ENCODE measurements at regions of chr12 and their contacts with region 1.

Region 1: DNA sequence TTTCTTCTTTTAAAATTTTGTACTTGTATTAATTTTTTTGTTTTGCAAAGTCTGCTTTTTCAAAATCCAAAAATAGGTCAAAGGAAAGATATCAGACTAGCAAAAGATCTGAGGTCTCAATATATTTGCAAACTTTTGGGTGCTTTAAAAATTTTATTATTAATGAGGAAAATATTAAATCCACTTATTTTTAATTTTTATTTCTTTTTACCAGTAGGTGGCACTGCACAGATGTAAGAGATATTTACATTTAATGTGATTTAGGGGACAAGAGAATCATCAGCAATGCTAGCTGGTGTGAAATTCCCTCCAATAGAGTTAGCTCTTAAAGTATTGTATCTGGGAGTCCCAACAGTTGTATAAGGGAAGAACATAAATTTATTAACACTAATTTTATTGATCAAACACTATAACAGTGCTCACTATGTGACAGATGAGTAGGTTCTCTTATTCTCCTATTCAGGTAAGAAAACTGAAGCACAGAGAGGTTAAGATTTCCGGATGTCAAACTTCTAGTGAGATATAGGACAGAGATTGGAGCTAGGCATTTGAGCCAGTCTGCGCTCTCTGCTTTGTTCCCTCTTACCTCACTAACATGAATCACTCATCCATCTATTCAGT is 30.5 kb downstream of the ALX1 start:
- DNase-seq: peak; percentile 11
- H3K4me3 Mint-ChIP-seq: no peak overlapping the region
- H3K27ac Mint-ChIP-seq: no peak overlapping the region
- H3K4me1 Mint-ChIP-seq: no peaks in the 10 kb centered on the region
- H3K27me3 Mint-ChIP-seq: no peaks in the 10 kb centered on the region
- CTCF ChIP-seq: peak; percentile 10

Region 2: GRCh38 chr12:85155787-85156186 is 154.8 kb before region 1 on chr12:
- CTCF ChIA-PET with region 1: interaction called, 3 read pairs
- POLR2A ChIA-PET with region 1: no interaction called
- intact Hi-C with region 1: loop called (anchors 2 kb)
- DNase-seq: peak; percentile 60
- H3K4me3 Mint-ChIP-seq: no peak overlapping the region
- H3K27ac Mint-ChIP-seq: no peak overlapping the region
- H3K4me1 Mint-ChIP-seq: no peaks in the 10 kb centered on the region
- H3K27me3 Mint-ChIP-seq: no peaks in the 10 kb centered on the region
- CTCF ChIP-seq: peak; percentile 37

Region 3: GRCh38 chr12:85244561-85244960 is 66.0 kb before region 1 on chr12:
- CTCF ChIA-PET with region 1: no interaction called
- POLR2A ChIA-PET with region 1: no interaction called
- intact Hi-C with region 1: no loop called
- DNase-seq: no peak
- H3K4me3 Mint-ChIP-seq: no peak overlapping the region
- H3K27ac Mint-ChIP-seq: no peak overlapping the region
- H3K4me1 Mint-ChIP-seq: no peaks in the 10 kb centered on the region
- H3K27me3 Mint-ChIP-seq: no peaks in the 10 kb centered on the region
- CTCF ChIP-seq: no peak

Region 4: DNA sequence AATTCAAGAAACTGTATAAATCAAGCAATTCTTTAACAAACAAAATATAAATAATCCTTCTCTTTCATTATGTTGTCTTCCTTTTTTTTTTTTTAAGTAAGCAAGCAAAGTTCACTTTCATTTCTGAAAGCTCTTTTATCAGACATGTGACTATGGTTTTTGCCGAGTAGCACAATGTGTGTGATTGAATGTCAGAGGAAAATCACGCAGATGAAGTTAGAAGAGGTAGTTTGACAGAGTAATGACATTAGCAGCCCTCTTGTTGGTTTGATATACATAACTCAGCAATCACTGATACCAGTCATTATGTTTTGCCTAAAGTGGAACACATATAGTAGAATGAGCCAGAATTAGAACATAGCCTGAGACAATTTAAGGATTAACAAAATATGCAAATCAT is 11.5 kb before region 1 on chr12:
- CTCF ChIA-PET with region 1: interaction called, 11 read pairs
- POLR2A ChIA-PET with region 1: no interaction called
- intact Hi-C with region 1: no loop called
- DNase-seq: no peak
- H3K4me3 Mint-ChIP-seq: no peak overlapping the region
- H3K27ac Mint-ChIP-seq: no peak overlapping the region
- H3K4me1 Mint-ChIP-seq: no peaks in the 10 kb centered on the region
- H3K27me3 Mint-ChIP-seq: no peaks in the 10 kb centered on the region
- CTCF ChIP-seq: no peak

Region 5: DNA sequence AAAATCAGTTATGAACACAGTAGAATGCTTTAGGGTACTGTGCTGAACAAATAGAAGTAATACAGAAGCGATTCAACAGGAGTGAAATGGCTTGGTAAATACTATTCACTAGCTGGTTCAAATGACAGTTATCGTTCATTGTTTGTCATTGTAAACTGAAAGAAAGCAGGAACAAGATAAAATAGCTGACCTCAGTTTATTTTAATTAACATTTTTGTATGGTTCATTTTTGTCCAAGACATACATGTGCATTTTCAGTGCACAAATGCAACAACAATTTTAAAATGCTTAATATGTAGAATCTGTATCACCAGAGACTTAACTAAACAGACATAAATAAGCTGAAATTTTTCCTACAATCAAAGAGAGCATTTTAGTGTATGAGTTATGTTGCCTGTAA is 19.3 kb after region 1 on chr12:
- CTCF ChIA-PET with region 1: interaction called, 12 read pairs
- POLR2A ChIA-PET with region 1: no interaction called
- intact Hi-C with region 1: no loop called
- DNase-seq: no peak
- H3K4me3 Mint-ChIP-seq: no peak overlapping the region
- H3K27ac Mint-ChIP-seq: no peak overlapping the region
- H3K4me1 Mint-ChIP-seq: peaks cover 8% of the 10 kb centered on the region
- H3K27me3 Mint-ChIP-seq: no peaks in the 10 kb centered on the region
- CTCF ChIP-seq: no peak

Region 6: DNA sequence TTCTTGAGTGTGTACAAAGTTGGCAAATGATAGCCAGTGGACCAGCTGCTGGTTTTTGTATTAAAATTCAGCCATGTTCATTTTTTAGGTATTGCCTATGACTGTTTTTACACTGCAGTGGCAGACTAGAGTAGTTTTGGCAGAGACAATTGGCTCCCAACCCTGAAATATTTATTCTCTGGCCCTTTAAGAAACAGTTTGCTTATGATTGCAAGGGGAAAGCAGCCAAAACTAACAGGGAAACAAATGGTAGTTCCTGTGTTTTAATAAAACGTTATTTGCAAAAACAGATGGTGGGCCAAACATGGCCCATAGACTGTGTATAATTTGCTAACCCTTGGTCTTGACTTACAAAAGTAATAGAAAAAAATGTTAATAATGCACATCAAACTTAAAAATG is 79.7 kb after region 1 on chr12:
- CTCF ChIA-PET with region 1: no interaction called
- POLR2A ChIA-PET with region 1: no interaction called
- intact Hi-C with region 1: no loop called
- DNase-seq: no peak
- H3K4me3 Mint-ChIP-seq: no peak overlapping the region
- H3K27ac Mint-ChIP-seq: no peak overlapping the region
- H3K4me1 Mint-ChIP-seq: peaks cover 8% of the 10 kb centered on the region
- H3K27me3 Mint-ChIP-seq: no peaks in the 10 kb centered on the region
- CTCF ChIP-seq: no peak

Region 7: GRCh38 chr12:85441740-85442139 is 131.2 kb after region 1 on chr12:
- CTCF ChIA-PET with region 1: interaction called, 47 read pairs
- POLR2A ChIA-PET with region 1: no interaction called
- intact Hi-C with region 1: no loop called
- DNase-seq: peak; percentile 40
- H3K4me3 Mint-ChIP-seq: no peak overlapping the region
- H3K27ac Mint-ChIP-seq: no peak overlapping the region
- H3K4me1 Mint-ChIP-seq: no peaks in the 10 kb centered on the region
- H3K27me3 Mint-ChIP-seq: no peaks in the 10 kb centered on the region
- CTCF ChIP-seq: peak; percentile 21

Region 8: DNA sequence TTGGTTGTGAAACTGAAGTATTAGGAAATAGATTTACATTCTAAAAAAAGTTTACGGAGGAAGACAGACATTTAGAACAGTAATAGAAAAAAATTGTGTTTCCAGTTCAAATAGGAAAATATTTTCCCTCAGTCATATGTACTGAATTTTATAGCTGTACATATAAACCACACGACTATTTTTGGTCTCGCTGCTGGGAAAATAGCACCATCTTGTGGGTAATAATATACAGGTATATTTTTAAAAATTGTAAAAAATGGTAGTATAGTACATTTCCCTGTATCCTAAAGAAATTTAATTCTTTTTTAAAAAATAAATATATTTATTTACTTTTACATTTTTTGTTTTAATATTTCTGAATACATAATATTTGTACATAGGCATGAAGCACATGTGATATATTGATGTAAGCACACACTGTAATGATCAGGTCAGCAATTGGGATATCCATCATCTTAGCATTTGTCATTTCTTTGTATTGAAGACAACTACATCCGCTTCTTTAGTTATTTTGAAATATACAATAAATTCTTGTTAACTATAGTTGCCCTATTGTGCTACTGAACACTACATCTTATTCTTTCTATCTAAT is 138.1 kb after region 1 on chr12:
- CTCF ChIA-PET with region 1: interaction called, 7 read pairs
- POLR2A ChIA-PET with region 1: no interaction called
- intact Hi-C with region 1: loop called (anchors 2 kb)
- DNase-seq: peak; percentile 32
- H3K4me3 Mint-ChIP-seq: no peak overlapping the region
- H3K27ac Mint-ChIP-seq: no peak overlapping the region
- H3K4me1 Mint-ChIP-seq: peaks cover 6% of the 10 kb centered on the region
- H3K27me3 Mint-ChIP-seq: no peaks in the 10 kb centered on the region
- CTCF ChIP-seq: peak; percentile 43

Region 9: GRCh38 chr12:85920324-85920947 is 609.9 kb after region 1 on chr12:
- CTCF ChIA-PET with region 1: interaction called, 10 read pairs
- POLR2A ChIA-PET with region 1: no interaction called
- intact Hi-C with region 1: no loop called
- DNase-seq: peak; percentile 39
- H3K4me3 Mint-ChIP-seq: no peak overlapping the region
- H3K27ac Mint-ChIP-seq: no peak overlapping the region
- H3K4me1 Mint-ChIP-seq: no peaks in the 10 kb centered on the region
- H3K27me3 Mint-ChIP-seq: no peaks in the 10 kb centered on the region
- CTCF ChIP-seq: peak; percentile 50

Region 10: DNA sequence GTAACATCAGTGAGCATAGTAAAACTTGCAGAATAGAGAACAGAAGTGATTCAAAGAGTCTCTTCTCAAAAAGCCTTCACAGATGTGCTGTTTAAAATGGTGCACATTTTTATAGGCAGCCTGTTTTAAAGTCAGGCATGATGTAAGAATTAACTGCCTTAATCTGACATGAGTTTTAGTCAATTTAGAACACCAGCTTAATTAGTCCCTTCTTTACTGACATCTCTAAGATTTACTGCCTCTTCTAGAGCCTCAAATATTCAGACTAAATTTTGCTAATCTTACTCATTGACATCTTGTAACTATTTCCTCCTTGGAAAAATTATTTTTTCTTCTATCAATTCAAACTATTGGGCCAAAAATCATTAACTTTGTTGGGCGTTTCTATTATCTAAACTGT is 1936.2 kb after region 1 on chr12:
- CTCF ChIA-PET with region 1: no interaction called
- POLR2A ChIA-PET with region 1: no interaction called
- intact Hi-C with region 1: no loop called
- DNase-seq: no peak
- H3K4me3 Mint-ChIP-seq: no peak overlapping the region
- H3K27ac Mint-ChIP-seq: no peak overlapping the region
- H3K4me1 Mint-ChIP-seq: peaks cover 24% of the 10 kb centered on the region
- H3K27me3 Mint-ChIP-seq: no peaks in the 10 kb centered on the region
- CTCF ChIP-seq: no peak

Measured in MCF 10A (cell line).